Right cardiac atrium (tissue), 5 donors: ENCODE measurements at regions of chr10 and their contacts with region 1.

Region 1: GRCh38 chr10:119281581-119282071 is 74.3 kb downstream of the GRK5 start:
- DNase-seq: peak; percentile 90 to 95 (median 95)
- ATAC-seq: peak; percentile 65
- H3K4me3 ChIP-seq: no peak overlapping the region
- H3K27ac ChIP-seq: peak overlapping the region; percentile 25
- H3K4me1 ChIP-seq: peaks cover 57% of the 10 kb centered on the region
- H3K27me3 ChIP-seq: no peaks in the 10 kb centered on the region

Region 2: DNA sequence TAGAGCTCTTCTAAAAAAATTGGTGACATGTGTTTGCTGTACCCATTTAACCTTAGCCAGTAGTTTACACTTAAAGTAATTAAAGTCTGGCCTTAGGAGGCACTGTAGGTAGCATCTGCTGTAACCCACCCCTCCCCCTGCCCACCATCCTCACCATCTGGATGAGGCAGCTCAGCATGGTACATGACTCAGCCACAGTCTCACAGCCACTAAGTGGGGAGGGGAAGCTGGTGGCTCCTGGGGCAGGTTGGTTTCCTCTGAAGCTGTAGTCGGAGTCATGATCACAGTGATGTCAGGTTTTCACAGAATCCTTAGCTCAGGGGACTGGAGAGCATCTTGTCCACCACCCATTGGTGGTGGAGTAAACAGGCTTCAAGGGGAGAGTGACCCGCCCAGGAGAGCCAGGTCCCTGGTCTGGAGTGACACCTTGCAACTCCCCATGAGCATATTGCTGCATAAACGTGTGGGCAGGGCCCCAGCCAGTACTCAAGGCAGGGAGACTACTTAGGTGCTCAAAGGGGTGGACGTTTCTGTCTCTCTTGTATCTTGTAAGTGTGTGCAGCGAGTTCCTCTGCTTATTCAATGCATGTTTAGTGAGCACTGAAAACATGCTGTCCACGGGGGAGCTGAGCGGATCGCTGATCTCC is 51.6 kb after region 1 on chr10:
- intact Hi-C with region 1: loop called in 1 of 4 experiments (anchors 10 kb)
- DNase-seq: no peak
- ATAC-seq: no peak
- H3K4me3 ChIP-seq: no peak overlapping the region
- H3K27ac ChIP-seq: no peak overlapping the region
- H3K4me1 ChIP-seq: peaks cover 22% of the 10 kb centered on the region
- H3K27me3 ChIP-seq: no peaks in the 10 kb centered on the region

Region 3: DNA sequence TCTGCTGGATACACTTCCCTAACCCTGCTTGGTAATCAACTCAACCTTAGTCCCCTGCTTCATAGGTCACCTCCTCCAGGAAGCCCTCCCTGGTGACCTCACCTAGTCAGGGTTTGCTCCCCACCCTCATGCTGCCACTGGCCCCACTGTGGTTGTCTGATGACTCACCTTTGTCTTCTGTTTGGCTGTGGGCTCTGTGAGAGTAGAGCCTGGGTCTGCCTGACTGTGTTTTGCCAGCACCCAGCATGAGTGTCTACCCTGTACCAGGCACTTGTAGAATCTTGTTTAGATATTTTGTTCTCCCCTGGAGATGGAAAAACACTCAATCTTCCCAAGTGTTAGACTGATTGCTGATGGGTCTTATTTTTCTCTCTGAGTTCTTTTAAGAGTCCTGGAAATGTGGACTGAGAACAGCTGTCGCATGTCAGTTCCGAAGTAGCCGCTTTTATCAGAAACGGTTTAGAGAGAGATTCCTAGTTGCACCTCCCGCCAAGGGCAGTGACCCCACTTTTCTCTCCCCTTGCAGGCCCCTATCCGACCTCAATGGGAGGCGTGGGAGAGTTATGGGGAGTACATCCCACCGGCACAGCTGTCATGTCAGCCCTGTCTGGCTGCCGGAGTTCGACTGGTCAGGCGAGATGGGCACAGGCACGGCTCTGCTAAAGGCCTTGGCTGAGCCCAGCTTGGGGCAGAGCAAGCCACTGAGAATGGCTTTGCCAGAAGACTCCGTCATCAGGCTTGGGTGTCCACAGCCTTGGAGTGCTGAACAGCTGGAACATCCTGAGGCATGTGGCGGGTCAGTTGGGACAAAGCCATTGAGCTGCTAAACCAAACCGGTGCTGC is 60.1 kb after region 1 on chr10:
- intact Hi-C with region 1: loop called in 2 of 4 experiments (anchors 10 kb)
- DNase-seq: peak; percentile 83 to 93 (median 91)
- ATAC-seq: peak; percentile 83 to 92
- H3K4me3 ChIP-seq: no peak overlapping the region
- H3K27ac ChIP-seq: peak overlapping the region; percentile 94
- H3K4me1 ChIP-seq: peaks cover 28% of the 10 kb centered on the region
- H3K27me3 ChIP-seq: no peaks in the 10 kb centered on the region

Region 4: DNA sequence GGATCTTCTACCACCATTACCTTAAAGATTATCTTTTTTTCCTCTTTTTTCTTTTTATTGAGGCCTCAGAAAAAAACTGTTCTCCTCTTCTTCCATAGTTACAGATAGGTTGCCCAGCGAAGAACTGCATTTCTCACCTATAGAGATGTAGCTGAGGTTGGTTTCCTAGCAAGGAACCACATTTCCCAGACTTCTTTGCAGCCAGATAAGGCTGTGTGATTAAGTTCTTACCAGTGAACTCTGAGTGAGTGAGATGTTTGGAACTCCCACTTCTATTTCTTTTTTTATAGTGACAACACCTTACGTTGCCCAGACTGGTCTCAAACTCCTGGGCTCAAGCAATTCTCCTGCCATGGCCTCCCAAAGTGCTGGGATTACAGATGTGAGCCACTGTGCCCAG is 596.9 kb after region 1 on chr10:
- intact Hi-C with region 1: no loop called
- DNase-seq: no peak
- ATAC-seq: no peak
- H3K4me3 ChIP-seq: no peak overlapping the region
- H3K27ac ChIP-seq: no peak overlapping the region
- H3K4me1 ChIP-seq: no peaks in the 10 kb centered on the region
- H3K27me3 ChIP-seq: no peaks in the 10 kb centered on the region